HAP-1 (cell line): ENCODE measurements at regions of chr11 and their contacts with region 1.

Region 1: GRCh38 chr11:20342347-20343141 is 21.0 kb upstream of the HTATIP2 start:
- DNase-seq: peak in 1 of 2 experiments; percentile 52
- H3K4me3 ChIP-seq: no peak overlapping the region
- H3K4me1 ChIP-seq: no peaks in the 10 kb centered on the region
- H3K27me3 ChIP-seq: peaks cover 31% of the 10 kb centered on the region

Region 2: GRCh38 chr11:20002312-20003216 is 340.0 kb before region 1 on chr11:
- in situ Hi-C with region 1: no loop called
- DNase-seq: no peak
- H3K4me3 ChIP-seq: no peak overlapping the region
- H3K4me1 ChIP-seq: peaks cover 30% of the 10 kb centered on the region
- H3K27me3 ChIP-seq: no peaks in the 10 kb centered on the region

Region 3: DNA sequence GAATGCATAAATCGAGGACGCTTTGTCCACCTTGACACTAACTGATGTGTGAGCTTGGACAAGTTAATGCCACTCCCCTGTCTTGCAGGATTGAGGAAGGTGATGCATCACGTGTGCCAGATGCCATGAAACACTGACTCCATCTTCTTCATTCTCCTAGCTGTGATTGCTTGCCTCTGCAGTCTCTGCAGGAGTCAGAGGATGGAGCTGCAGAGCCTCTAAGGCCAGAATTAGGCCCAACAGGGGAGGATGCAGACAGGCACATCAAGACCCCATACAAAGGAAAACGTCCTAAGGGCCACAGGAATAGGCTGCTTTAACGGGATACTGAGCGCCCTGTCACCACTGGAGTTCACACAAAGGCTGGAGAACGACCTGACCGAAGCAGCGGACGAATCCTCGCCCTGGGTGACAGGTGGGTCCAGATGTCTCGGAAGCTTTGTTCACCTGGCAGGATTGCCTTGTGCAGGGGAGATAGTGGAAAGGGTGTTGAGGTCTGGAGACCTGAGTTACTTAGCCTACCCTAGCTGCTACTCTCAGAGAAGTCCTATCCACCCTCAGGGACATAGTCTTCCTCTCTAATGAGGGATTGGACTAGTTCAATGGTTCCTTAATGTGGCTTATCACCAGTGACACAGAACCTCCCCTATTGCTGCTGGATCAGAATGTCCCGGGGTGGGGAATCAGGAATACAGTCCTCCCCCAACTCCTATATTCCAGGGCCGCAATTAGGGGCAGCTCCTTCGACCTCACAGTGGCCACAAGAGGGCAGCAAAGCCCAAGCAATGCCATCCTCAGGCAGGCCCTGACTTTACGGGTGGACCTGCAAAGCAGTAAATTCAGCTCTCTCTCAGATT is 214.6 kb before region 1 on chr11:
- in situ Hi-C with region 1: loop called (anchors 5 kb)
- DNase-seq: peak; percentile 44 to 90
- H3K4me3 ChIP-seq: no peak overlapping the region
- H3K4me1 ChIP-seq: no peaks in the 10 kb centered on the region
- H3K27me3 ChIP-seq: 0 out of 2 replicates have a peak, but pooled peaks cover 6% of the 10 kb centered on the region

Region 4: GRCh38 chr11:20226933-20227332 is 115.6 kb before region 1 on chr11:
- in situ Hi-C with region 1: no loop called
- DNase-seq: no peak
- H3K4me3 ChIP-seq: no peak overlapping the region
- H3K4me1 ChIP-seq: no peaks in the 10 kb centered on the region
- H3K27me3 ChIP-seq: 0 out of 2 replicates have a peak, but pooled peaks cover 3% of the 10 kb centered on the region